ENCODE measurements at regions of chr3 and their contacts with region 1.

Region 1: GRCh38 chr3:151282921-151283320 is 4.6 kb upstream of the P2RY14 start:
- DNase-seq: no peak
- ATAC-seq: peak; percentile 64 to 89 (median 78)
- H3K4me3 ChIP-seq: no peak overlapping the region
- H3K27ac ChIP-seq: no peak overlapping the region
- H3K4me1 ChIP-seq: no peaks in the 10 kb centered on the region
- H3K27me3 ChIP-seq: no peaks in the 10 kb centered on the region
- CTCF ChIP-seq: peak; percentile 77

Region 2: GRCh38 chr3:151159806-151160205 is 123.1 kb before region 1 on chr3:
- intact Hi-C with region 1: loop called in 1 of 2 experiments (anchors 2 kb)
- DNase-seq: no peak
- ATAC-seq: no peak
- H3K4me3 ChIP-seq: no peak overlapping the region
- H3K27ac ChIP-seq: no peak overlapping the region
- H3K4me1 ChIP-seq: no peaks in the 10 kb centered on the region
- H3K27me3 ChIP-seq: no peaks in the 10 kb centered on the region
- CTCF ChIP-seq: no peak

Region 3: DNA sequence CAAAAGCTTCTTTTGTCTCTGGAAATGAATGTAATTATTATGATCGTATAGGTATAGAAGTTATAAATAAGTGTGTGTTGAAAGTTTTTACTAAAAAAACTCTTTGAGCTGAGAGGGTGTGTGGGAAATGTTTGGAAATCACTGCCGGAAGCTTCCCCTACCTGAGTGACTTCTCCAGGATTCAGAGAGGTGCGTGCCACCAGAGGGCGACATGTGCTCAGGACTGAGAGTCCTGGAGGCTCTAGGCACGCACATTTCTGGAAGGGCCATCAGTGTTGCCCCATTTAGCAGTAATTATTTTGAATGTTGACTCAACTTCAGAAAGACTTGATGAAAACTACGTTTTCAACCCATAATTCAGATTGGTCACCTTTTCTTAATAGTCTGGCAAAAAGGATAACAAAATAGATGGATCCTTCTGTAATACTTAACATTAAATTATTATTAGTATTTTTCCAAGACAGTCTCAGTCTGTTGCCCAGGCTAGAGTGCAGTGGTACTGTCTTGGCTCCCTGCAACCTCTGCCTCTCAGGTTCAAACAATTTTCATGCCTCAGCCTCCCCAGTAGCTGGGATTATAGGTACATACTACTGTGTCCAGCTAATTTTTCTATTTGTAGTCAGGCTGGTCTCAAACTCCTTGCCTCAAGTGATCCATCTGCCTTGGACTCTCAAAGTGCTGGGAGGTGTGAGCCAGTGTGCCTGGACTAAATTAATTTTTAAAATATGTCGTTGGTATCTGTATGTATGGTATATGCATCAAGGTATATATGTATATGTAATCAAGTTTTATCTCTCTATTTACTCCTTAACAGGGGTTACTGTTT is 114.4 kb before region 1 on chr3:
- intact Hi-C with region 1: loop called (anchors 1 to 2 kb)
- DNase-seq: peak; percentile 79 to 91
- ATAC-seq: peak; percentile 85 to 89 (median 87)
- H3K4me3 ChIP-seq: no peak overlapping the region
- H3K27ac ChIP-seq: peak overlapping the region; percentile 84
- H3K4me1 ChIP-seq: peaks cover 22% of the 10 kb centered on the region
- H3K27me3 ChIP-seq: no peaks in the 10 kb centered on the region
- CTCF ChIP-seq: peak; percentile 87

Region 4: DNA sequence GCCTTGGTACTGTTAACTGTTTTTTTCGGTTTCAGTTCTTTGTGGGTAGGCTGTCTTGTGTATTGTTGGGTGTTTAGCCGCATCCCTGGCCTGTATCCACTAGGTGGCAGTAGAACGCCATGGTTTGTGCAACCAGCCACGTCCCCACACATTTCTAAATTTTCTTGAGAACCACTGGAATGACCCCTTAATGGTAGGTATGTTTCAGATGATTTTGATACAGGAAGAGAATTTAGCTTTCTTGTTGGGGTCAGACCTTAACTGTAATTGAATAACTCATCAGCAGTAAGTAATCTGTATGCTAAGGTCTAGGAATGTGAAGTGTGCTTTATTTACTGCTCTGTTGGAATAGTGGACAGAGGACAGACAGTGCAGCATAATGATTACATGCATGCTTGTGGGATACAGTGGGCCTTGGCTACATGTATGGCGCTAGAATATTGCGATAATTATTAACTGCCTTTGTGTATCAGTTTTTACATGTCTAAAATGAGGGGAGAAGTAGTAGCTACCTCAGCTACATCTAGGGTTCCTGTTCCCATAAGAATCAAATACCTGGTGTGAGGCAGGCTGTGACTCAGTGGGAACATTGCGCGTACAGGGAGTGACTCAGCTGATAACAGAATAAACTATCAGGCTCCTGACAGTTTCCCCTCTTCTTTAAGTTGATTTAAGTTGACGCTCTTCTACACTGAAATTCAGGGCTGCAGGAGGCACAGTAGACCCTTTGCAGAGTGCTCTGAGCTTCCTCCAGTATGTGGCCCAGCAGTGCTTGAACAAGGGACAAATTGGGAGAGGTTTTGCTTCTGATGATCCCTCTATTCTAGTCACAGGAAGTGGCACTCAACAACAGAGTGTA is 54.9 kb before region 1 on chr3:
- intact Hi-C with region 1: loop called (anchors 1 to 5 kb)
- DNase-seq: peak; percentile 59 to 76
- ATAC-seq: peak; percentile 68 to 82 (median 70)
- H3K4me3 ChIP-seq: no peak overlapping the region
- H3K27ac ChIP-seq: peak overlapping the region; percentile 68
- H3K4me1 ChIP-seq: peaks cover 23% of the 10 kb centered on the region
- H3K27me3 ChIP-seq: no peaks in the 10 kb centered on the region
- CTCF ChIP-seq: peak; percentile 89

Region 5: GRCh38 chr3:151460774-151461450 is 178.0 kb after region 1 on chr3 and contains the start of gene IGSF10:
- intact Hi-C with region 1: no loop called
- DNase-seq: peak in 1 of 2 donors; percentile 17
- ATAC-seq: peak in 1 of 4 donors; percentile 46
- H3K4me3 ChIP-seq: peak within 1 kb of the TSS; percentile 61
- H3K27ac ChIP-seq: no peak within 1 kb of the TSS
- H3K4me1 ChIP-seq: no peaks in the 10 kb centered on the region
- H3K27me3 ChIP-seq: peaks cover 0 to 41% (median 2%) of the 10 kb centered on the region in 3 donors
- CTCF ChIP-seq: no peak
- total RNA-seq, gene IGSF10: 0.06 to 1.3 (median 0.37) TPM